Activated CD4-positive, alpha-beta T cell treated with anti-CD3 and anti-CD28 coated beads, Interleukin-2, amount 10 ng/mL, durations not matched to agents 24 days and 14 days (primary cell): ENCODE measurements at regions of chr9 and their contacts with region 1.

Region 1: DNA sequence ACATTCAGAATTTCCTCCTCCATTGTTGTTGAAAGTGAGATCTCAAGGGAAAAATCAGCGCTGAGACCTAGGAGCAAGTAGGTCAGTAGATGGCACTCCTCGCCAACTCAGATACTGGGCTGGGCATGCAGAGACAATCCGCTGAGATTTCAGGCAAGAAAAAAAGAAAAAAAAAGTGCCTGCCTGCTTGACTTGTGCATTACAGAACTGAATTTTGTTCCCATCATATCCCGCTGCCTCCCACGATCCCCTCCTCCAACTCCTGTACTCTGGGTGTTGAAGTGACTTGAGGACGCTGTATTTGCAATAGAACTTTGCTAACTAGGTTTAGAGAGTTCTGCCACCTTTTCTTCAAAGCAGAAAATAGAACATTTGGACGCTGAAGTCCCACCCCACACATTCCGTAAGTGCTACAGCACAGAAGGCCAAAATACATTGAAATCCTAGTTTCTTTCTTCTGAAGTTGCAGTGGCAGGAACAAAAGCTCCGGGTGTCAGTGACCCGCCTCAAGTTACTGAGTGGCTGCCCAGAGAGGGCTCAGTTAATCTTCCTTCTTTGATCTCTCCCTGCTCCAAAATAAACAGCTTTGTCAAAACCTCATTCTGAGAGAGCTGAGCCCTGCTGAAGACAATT is 265.8 kb downstream of the MLLT3 start:
- DNase-seq: peak; percentile 85
- H3K4me3 Mint-ChIP-seq: no peak overlapping the region
- H3K27ac Mint-ChIP-seq: peak overlapping the region; percentile 51
- H3K4me1 Mint-ChIP-seq: peaks cover 76% of the 10 kb centered on the region
- H3K27me3 Mint-ChIP-seq: no peaks in the 10 kb centered on the region

Region 2: GRCh38 chr9:19999491-20000057 is 356.9 kb before region 1 on chr9:
- intact Hi-C with region 1: loop called (anchors 1 kb)
- DNase-seq: peak; percentile 88
- H3K4me3 Mint-ChIP-seq: peak overlapping the region; percentile 74
- H3K27ac Mint-ChIP-seq: peak overlapping the region; percentile 99
- H3K4me1 Mint-ChIP-seq: peaks cover 53% of the 10 kb centered on the region
- H3K27me3 Mint-ChIP-seq: no peaks in the 10 kb centered on the region

Region 3: GRCh38 chr9:20242510-20243189 is 113.9 kb before region 1 on chr9:
- intact Hi-C with region 1: loop called (anchors 1 kb)
- DNase-seq: peak; percentile 88
- H3K4me3 Mint-ChIP-seq: peak overlapping the region; percentile 77
- H3K27ac Mint-ChIP-seq: peak overlapping the region; percentile 61
- H3K4me1 Mint-ChIP-seq: peaks cover 58% of the 10 kb centered on the region
- H3K27me3 Mint-ChIP-seq: no peaks in the 10 kb centered on the region

Region 4: DNA sequence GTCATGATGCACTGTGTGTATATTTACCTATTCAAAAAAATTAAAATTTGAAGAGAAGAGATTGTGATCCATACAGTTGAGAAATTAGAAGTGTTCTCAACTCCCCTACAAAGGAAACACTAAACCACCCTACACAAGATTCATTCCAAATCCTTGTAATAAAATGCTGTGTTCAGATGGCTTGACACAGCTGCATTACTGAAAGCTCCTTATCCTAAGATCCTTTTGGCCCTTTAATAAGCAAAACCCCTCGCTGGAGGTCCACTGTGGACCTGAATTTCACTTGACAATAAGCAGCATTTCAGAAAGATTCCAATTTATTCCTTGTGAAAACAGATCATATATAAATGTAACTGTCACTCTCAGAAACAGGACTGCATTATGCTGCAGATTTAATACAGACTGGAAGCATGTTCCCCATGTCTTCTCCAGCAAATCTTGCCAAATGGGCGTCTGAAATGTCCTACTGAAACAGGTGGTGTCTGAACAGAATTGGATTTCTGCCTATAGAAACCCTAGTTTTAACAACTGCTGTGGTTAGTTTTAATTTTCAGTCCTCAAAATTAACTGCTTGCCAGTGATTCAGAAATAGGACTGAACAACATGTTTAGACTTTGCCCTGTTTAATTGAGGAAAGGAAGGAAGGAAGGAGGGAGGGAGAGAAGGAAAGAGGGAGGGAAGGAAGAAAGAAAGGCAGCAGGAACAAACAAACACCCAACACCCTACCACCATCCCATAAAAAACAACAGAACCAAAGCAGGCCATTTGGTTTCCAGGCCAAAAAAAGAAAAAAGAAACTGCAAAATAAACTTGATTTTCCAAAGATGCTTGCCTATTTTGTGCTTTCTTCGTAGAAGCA is 86.2 kb after region 1 on chr9:
- intact Hi-C with region 1: loop called (anchors 5 kb)
- DNase-seq: no peak
- H3K4me3 Mint-ChIP-seq: peak overlapping the region; percentile 13
- H3K27ac Mint-ChIP-seq: peak overlapping the region; percentile 3
- H3K4me1 Mint-ChIP-seq: peaks cover 32% of the 10 kb centered on the region
- H3K27me3 Mint-ChIP-seq: no peaks in the 10 kb centered on the region

Region 5: DNA sequence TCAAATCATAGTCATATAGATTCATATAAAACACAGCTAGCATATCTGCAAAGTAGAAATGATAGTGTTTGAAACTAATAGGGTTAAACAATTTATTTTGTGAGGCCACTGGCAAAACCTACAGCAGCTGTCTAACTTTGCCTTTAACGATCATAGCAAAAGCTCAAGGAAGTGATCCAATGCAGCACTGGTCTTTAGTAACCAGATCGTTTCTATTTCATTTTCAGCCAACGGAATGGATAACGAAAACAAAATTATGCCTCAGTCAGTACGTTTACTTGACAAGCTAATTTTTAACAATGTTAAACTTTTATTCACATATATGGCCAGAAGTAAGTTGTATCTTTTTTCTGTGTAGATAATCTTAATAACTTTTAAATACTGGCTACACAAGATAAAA is 248.0 kb after region 1 on chr9:
- intact Hi-C with region 1: loop called (anchors 1 kb)
- DNase-seq: peak; percentile 71
- H3K4me3 Mint-ChIP-seq: peak overlapping the region; percentile 72
- H3K27ac Mint-ChIP-seq: peak overlapping the region; percentile 79
- H3K4me1 Mint-ChIP-seq: peaks cover 60% of the 10 kb centered on the region
- H3K27me3 Mint-ChIP-seq: no peaks in the 10 kb centered on the region

Region 6: GRCh38 chr9:20929276-20929675 is 572.8 kb after region 1 on chr9:
- intact Hi-C with region 1: loop called (anchors 5 kb)
- DNase-seq: no peak
- H3K4me3 Mint-ChIP-seq: no peak overlapping the region
- H3K27ac Mint-ChIP-seq: no peak overlapping the region
- H3K4me1 Mint-ChIP-seq: peaks cover 25% of the 10 kb centered on the region
- H3K27me3 Mint-ChIP-seq: no peaks in the 10 kb centered on the region

Region 7: DNA sequence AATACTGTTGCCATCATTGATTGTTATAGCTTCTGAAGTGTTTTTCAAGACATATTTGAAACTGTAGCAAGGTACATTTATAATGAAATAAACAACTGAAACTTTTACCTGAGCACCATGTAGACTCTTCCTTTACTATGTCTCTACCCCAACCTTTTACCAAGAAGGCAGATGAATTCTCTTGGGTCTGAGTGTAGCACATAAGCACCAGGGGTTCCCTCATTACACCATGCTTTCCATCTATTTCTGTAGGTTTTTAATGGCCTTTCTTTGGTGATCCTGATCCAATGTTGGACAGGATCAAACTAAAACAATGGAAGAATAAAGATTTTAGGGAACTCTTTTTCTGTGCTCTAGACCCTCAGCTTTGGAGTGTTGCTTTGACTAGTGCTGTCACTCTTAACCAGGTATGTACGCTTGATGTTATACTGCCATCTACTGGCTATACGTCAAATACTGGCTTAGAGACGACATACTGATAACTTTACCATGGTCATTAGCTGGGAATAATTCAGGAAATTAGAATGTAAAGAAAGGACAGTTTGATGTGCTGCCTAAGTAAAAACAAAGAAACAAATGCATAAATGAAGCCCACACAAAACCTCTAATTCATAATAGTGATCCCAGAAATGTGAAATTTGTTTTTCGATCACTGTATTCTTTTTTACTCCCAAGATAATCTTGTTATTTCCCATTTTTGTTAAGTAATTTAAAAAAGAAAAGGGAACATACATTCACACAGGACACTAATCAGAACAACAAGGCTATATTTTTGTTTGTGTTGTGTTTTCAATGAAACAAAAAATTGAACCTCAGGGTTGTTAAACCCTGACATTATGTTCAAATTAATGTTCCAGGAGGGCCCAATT is 754.4 kb after region 1 on chr9:
- intact Hi-C with region 1: loop called (anchors 10 kb)
- DNase-seq: peak; percentile 81
- H3K4me3 Mint-ChIP-seq: no peak overlapping the region
- H3K27ac Mint-ChIP-seq: no peak overlapping the region
- H3K4me1 Mint-ChIP-seq: no peaks in the 10 kb centered on the region
- H3K27me3 Mint-ChIP-seq: peaks cover 24% of the 10 kb centered on the region